AG04449 (cell line): ENCODE measurements at regions of chr10 and their contacts with region 1.

Region 1: DNA sequence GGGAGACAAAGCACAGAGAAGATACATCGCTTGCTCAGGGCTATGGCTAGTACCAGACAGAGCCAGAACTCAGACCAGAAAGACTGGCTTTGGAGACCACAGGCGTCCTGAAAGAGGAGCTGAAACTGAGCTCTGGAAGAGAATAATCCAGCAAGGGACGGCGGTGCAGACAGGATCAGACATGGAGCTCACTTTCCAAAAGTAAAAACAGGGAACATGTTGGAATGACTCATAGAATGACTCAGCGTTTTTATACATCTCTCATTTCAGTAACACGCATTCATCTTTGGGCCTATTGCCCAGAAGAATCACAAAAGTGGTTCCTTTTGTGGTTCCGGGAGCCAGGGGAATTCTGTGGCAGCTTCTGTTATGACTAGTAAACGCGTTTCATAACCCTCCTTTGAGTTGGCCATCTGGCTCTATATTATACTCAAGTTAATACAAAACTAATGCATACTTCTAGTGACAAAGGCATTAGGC is 37.2 kb downstream of the PLEKHS1 start:
- DNase-seq: peak; percentile 86
- H3K4me3 ChIP-seq: no peak overlapping the region
- CTCF ChIP-seq: no peak

Region 2: DNA sequence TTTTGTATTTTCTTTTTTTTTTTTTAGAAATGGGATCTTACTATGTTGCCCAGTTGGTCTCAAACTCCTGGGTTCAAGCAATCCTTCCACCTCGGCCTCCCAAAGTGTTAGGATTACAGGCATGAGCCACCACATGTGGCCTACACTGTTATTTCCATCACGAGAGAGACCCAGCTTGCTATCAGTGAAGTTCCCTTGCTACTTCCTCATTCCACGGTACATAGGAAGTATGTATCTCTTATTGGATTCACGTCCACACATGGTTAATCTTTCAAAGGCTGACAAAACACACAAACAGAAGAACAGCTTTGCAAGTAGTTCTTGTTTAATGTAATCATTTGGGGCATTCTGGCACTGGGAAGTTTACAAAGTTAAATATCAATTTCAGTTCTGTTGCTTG is 14.4 kb after region 1 on chr10:
- CTCF ChIA-PET with region 1: interaction called, 48 read pairs
- POLR2A ChIA-PET with region 1: no interaction called
- DNase-seq: no peak
- H3K4me3 ChIP-seq: no peak overlapping the region
- CTCF ChIP-seq: no peak